Activated T-helper 1 cell treated with anti-CD3 and anti-CD28 coated beads, Interleukin-12 subunit alpha, Interleukin-12 subunit beta, Interleukin-2, Interleukin-4 antibody, amounts not matched to agents 30 ng/mL and 10 ng/mL and 1 ng/mL, durations not matched to agents 14 hours and 24 hours and 36 hours (primary cell): ENCODE measurements at regions of chr1 and their contacts with region 1.

Region 1: DNA sequence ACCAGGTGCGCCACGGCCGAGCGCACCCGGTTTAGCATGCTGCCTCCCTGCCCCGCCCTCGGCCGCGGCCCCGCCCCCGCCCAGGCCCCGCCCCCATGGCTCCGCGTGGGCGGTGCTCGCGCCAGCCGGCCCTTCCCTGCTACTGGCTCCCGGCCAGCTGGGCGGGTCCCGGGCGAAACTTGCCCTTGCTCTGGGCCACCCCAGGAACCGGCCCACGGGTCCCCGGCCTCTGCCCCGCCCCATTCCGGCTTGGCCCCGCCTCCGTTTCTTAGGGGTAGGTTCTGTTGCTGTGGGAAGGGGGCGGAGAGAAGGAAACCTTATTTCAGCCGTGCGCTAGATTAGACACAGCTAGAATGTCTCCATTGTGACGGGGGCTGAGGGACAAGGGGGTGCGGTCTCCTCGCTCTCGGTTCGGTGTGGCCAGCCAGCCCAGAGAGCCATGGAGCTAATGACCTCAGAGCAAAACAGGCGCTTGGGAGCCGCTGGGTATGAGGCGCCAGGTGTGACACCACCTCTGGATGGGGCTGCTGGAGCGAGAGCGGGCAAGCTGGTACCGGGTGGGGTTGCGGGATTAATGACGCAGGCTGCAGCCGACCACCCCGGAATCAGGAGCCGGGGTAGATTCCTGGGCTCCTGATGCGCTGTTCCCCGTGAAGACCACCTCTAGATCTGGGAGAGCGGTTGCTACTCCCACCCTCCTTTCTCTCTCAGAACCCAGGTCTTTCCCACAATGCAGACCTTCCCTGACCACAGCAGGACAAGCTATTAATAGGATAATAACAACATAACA is at the start of gene PPM1J:
- DNase-seq: peak; percentile 99
- H3K4me3 Mint-ChIP-seq: peak within 1 kb of the TSS; percentile 86
- H3K27ac Mint-ChIP-seq: peak within 1 kb of the TSS; percentile 27
- H3K4me1 Mint-ChIP-seq: peaks cover 41% of the 10 kb centered on the region
- H3K27me3 Mint-ChIP-seq: peaks cover 29% of the 10 kb centered on the region
- total RNA-seq, gene PPM1J: 0.60 and 1.1 TPM in 2 replicates

Region 2: DNA sequence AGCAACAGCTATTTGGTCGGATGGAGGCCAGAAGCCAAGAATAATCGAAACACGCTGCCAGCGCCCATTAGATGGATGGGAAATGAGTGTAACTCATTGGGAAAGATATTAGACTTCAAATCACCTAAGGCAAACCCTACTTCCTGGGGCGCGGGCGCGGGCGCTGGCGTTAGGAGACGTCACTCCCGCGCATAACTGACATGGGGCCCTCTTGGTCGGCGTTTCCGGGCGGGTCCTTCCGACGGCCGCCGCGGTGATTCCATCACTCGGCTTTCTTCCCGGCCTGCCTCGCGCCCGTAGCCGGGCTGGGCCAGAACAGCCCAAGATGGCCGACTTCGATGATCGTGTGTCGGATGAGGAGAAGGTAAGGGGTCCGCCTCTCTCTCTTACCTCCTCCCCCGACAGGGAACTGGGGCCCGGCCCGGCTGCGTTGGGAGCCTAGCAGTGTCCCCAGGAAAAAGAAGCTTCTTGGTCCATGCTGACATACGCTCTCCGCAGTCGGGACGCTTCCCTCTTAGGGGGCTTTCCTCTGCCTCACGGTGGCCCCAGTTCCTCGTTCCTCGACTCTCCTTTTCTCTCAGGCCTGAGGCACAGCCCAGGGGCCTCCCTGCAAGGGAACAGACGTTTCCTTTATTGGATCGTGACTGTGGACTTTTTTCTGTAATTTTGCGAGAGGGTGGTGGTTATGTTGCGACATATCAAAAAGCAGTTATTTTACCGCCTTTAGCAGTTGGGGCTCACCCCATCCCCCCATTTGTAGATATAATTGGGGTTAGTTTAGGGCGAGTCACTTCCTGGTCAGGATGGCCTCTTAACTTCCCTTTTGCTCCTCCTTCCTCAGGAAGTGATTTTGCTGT is 95.7 kb before region 1 on chr1 and contains the start of gene CAPZA1:
- intact Hi-C with region 1: loop called (anchors 1 kb)
- DNase-seq: peak; percentile 90
- H3K4me3 Mint-ChIP-seq: peak within 1 kb of the TSS; percentile 98
- H3K27ac Mint-ChIP-seq: peak within 1 kb of the TSS; percentile 98
- H3K4me1 Mint-ChIP-seq: peaks cover 48% of the 10 kb centered on the region
- H3K27me3 Mint-ChIP-seq: no peaks in the 10 kb centered on the region
- total RNA-seq, gene CAPZA1: 239 and 242 TPM in 2 replicates

Region 3: DNA sequence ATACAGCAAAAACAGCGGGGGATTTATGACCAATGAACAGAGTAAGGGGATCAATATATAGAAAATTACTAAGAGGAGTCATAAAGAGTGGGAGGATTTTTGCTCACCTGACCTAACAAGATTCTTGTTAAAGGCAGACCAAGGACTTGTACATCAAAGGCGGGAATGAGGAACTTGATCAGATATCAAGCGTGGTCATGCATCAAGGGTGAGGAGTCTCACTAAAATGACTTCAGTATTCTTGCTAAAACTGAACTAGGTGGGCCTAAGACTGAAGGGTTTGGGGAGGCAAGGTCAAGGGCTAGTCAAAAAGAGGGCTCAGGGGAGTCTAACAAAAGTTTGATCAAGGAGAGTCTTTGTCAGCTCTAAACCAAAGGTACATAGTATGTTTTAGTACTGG is 38.9 kb before region 1 on chr1:
- intact Hi-C with region 1: no loop called
- DNase-seq: no peak
- H3K4me3 Mint-ChIP-seq: peak overlapping the region; percentile 81
- H3K27ac Mint-ChIP-seq: no peak overlapping the region
- H3K4me1 Mint-ChIP-seq: peaks cover 61% of the 10 kb centered on the region
- H3K27me3 Mint-ChIP-seq: no peaks in the 10 kb centered on the region

Region 4: GRCh38 chr1:112688781-112689193 is 26.7 kb before region 1 on chr1:
- intact Hi-C with region 1: no loop called
- DNase-seq: no peak
- H3K4me3 Mint-ChIP-seq: no peak overlapping the region
- H3K27ac Mint-ChIP-seq: no peak overlapping the region
- H3K4me1 Mint-ChIP-seq: peaks cover 6% of the 10 kb centered on the region
- H3K27me3 Mint-ChIP-seq: no peaks in the 10 kb centered on the region

Region 5: DNA sequence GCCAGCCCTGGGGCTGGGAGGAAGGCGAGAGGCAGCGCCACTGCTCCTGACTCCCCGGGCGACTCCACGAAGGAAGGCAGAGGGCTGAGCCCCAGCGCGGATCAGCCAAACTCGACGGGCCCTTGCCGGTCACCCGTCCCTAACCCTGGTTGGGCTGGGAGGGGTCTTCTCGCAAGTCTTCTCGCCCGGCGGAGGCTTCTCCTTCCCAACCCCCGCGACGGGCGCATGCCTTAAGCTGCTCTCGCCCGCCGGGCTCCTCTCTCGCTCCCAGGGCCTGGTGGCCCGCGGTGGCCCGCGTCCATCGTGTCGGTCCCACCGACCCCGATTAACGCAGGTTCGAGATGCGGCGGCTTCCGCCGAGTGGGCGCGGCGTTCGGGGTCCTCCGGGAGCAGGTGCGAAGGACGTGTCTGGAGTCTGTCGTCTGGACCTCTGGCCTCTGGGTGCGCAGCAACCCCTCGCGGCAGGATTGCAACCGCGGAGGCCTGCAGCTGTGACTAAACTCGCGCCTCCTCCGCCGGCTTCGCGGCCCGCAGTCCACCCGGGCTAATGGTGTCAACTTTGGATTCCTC is 28.6 kb after region 1 on chr1:
- intact Hi-C with region 1: no loop called
- DNase-seq: no peak
- H3K4me3 Mint-ChIP-seq: no peak overlapping the region
- H3K27ac Mint-ChIP-seq: no peak overlapping the region
- H3K4me1 Mint-ChIP-seq: no peaks in the 10 kb centered on the region
- H3K27me3 Mint-ChIP-seq: peaks cover 59% of the 10 kb centered on the region

Region 6: GRCh38 chr1:112803906-112804762 is 88.7 kb after region 1 on chr1:
- intact Hi-C with region 1: loop called (anchors 1 kb)
- DNase-seq: peak; percentile 29
- H3K4me3 Mint-ChIP-seq: no peak overlapping the region
- H3K27ac Mint-ChIP-seq: no peak overlapping the region
- H3K4me1 Mint-ChIP-seq: no peaks in the 10 kb centered on the region
- H3K27me3 Mint-ChIP-seq: peaks cover 5% of the 10 kb centered on the region

Region 7: DNA sequence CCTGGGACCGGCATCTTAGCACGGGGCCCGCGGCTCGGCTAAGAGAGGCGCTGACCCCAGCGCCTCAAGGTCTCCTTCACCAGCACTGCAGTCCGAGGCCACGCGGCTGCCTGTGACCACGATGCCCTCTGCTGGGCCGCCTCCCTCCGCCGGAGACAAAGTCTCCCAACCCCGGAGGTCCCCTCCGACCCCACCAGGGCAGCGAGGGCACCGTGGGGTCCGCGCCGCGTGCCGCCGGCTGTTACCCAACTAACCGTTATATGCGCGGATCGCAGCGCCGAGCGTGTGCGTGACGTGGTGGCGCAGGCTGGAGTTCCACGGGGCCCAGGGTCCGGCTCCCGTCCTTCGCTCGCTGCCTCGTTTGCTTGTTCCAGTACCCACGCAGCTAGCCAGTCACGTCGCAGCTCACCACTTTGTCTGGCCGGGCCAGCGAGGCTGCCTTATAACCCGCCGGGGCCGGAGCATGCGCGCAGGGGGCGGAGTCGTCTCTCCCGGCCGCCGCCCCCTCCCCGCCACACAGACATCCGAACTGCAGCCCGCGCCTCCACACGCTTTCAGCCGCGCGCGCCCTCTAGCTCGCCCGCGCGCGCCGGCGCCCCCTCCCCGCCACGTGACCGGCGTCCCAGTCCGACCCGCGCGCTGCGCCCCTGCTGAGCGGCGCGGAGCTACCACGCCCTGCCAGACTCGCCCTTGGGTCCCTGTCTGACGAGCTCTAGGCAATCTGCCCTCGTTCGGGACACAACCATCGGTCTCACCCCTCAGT is 240.5 kb after region 1 on chr1 and contains the start of gene SLC16A1:
- intact Hi-C with region 1: loop called (anchors 1 kb)
- DNase-seq: peak; percentile 90
- H3K4me3 Mint-ChIP-seq: peak within 1 kb of the TSS; percentile 90
- H3K27ac Mint-ChIP-seq: peak within 1 kb of the TSS; percentile 100
- H3K4me1 Mint-ChIP-seq: peaks cover 59% of the 10 kb centered on the region
- H3K27me3 Mint-ChIP-seq: no peaks in the 10 kb centered on the region
- total RNA-seq, gene SLC16A1: 73.6 and 77.4 TPM in 2 replicates

Region 8: GRCh38 chr1:113389953-113390834 is 674.7 kb after region 1 on chr1 and contains the start of gene MAGI3:
- intact Hi-C with region 1: loop called (anchors 2 kb)
- DNase-seq: peak; percentile 95
- H3K4me3 Mint-ChIP-seq: peak within 1 kb of the TSS; percentile 88
- H3K27ac Mint-ChIP-seq: peak within 1 kb of the TSS; percentile 79
- H3K4me1 Mint-ChIP-seq: peaks cover 30% of the 10 kb centered on the region
- H3K27me3 Mint-ChIP-seq: peaks cover 33% of the 10 kb centered on the region
- total RNA-seq, gene MAGI3: 3.0 and 3.2 TPM in 2 replicates

Region 9: DNA sequence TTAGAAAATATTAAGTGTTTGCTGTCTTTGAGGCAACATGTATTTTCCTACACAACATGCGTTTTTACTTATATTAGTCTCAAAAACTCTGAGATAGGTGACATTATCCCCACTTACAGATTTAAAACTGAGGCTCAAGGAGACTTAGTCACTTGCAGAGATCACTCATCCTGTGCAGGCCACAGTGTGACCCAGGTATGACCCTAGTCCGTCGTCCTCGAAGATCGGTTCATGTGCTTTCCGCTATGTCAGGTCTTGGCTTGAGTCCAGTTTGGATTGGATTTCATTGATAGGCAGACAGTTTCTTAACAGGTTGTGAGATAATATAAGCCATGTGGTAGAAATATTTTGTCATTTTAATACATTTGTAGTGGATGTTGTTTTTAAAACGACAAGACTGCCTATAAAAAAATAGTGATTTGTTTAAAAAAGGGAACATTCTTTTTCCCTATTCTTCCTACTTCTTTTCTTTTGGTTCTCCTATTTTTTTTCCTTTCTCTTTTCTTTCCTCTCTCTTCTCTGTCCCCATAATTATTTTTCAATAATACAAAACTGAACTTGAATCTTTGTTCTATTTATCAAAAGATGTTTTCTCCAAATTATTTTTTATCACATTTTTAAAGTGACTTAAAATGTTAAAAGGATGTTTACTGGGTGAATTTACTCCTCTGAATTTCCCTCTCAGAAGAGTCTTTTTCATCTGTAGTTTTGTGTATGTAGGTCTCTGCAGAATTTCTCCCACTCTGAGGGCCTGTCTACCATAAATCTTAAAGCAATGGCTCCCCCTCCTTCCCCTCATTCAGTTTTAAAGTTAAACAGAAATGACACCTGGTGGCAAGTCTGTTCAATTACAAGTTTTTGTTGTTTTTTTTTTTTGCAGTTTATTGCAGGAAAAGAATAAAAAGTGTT is 962.0 kb after region 1 on chr1:
- intact Hi-C with region 1: loop called (anchors 2 kb)
- DNase-seq: no peak
- H3K4me3 Mint-ChIP-seq: no peak overlapping the region
- H3K27ac Mint-ChIP-seq: no peak overlapping the region
- H3K4me1 Mint-ChIP-seq: peaks cover 6% of the 10 kb centered on the region
- H3K27me3 Mint-ChIP-seq: no peaks in the 10 kb centered on the region